A549 (cell line): ENCODE measurements at regions of chr10 and their contacts with region 1.

Region 1: DNA sequence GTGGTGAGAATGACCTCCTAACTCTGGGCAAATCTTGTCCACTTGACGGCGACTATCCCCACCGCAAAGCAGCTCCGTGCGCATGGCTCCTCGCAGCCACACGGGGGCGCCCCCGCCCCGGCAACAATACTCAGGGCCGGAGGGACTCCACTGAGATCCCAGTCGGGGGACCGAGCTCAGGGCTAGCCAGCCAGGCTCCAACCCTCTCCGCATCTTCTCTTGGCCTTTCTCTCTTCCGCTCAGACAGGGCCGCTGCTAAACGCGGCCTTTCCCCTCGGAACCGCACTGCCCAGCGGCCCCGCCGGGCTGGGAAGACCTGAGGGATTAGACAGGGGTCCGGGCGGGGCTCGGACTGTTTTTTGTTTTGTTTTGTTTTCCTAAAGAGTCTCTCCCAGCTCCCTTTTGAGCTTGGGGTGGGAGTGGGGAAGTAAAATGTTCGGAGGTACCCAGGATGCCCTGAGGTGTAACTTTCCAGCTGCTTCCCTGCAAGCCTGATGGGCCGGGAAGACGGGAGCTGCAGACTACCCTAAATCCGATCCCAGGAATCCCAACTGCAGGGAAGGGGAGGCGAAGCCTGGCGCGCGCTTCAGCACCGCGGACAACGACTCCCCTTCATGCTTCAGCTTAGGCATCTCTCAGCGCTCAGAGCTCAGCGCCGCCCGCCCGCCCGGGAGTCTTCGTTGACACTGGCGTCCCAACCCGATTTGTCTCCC is 2.7 kb downstream of the KCNIP2 start:
- DNase-seq: peak; percentile 83 to 86
- ATAC-seq: peak; percentile 78 to 90
- H3K4me3 ChIP-seq: peak overlapping the region; percentile 38; the same call in 1 of the 3 replicates
- H3K27ac ChIP-seq: peak overlapping the region in 1 of 2 experiments; percentile 77; a peak in 3 of 6 replicates
- H3K4me1 ChIP-seq: peaks cover 20% of the 10 kb centered on the region
- CTCF ChIP-seq: peak; percentile 96
- EP300 ChIP-seq: no peak
- POLR2A ChIP-seq: no peak
- RAD21 ChIP-seq: peak; percentile 87 to 95

Region 2: DNA sequence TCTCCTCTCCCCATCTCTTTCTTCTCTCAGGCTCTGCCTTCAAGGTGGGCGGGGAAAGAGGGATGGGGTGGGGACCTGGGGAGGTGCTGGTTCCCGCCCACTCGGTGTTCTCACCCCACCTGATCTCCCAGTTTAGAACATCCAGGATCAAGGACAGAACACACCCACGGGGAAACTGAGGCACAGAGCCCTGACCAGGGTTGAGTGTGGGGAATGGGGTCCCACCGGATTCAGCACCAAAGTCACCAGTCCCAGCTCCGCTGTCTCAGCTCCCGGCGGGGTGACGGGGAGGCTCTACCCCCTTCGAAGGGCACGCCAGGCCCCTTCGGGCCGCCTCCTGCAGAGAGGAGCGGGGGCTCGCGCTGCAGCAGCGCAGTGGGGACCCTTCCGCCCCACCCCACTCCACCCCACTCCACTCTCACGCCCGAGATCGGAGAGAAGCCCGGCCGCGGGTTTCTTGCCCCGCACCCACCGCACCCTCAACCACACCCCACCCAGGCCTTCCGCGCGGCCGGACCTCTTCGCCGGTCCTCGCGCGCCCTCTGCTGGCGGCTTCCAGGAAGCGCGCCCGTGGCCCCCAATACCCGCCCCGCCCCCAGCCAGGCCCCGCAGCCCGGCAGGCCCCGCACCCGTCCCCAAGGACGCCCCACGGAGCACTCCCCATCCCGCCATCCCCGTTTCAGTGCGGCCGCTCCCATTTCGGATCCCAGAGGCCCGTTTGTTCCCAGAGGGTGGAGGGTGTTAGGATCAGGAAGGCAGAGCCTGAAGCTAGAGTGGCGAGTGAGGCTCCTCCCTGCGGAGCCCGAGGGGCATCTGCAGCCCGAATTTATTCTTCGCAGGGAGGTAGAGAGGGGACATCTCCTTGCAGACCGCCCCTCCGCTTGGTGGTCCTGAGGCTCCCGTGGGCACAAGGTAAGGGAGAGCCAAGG is 270.8 kb before region 1 on chr10:
- CTCF ChIA-PET with region 1: no interaction called
- POLR2A ChIA-PET with region 1: no interaction called
- DNase-seq: peak; percentile 69 to 88
- ATAC-seq: peak; percentile 69 to 88
- H3K4me3 ChIP-seq: peak overlapping the region; percentile 63
- H3K27ac ChIP-seq: peak overlapping the region; percentile 81 to 92
- H3K4me1 ChIP-seq: peaks cover 10% of the 10 kb centered on the region; the same call in 2 of the 3 replicates
- CTCF ChIP-seq: peak; percentile 93
- EP300 ChIP-seq: no peak
- POLR2A ChIP-seq: peak; percentile 26; the same call in 1 of the 2 replicates
- RAD21 ChIP-seq: peak; percentile 75 to 96

Region 3: GRCh38 chr10:101818119-101818871 is 22.6 kb before region 1 on chr10 and contains the start of gene OGA:
- CTCF ChIA-PET with region 1: interaction called, 47 read pairs
- POLR2A ChIA-PET with region 1: interaction called, 9 read pairs
- DNase-seq: peak; percentile 97 to 100
- ATAC-seq: peak; percentile 87 to 94
- H3K4me3 ChIP-seq: peak within 1 kb of the TSS; percentile 96
- H3K27ac ChIP-seq: peak within 1 kb of the TSS; percentile 95 to 97
- H3K4me1 ChIP-seq: peaks cover 30% of the 10 kb centered on the region
- CTCF ChIP-seq: no peak
- EP300 ChIP-seq: no peak
- POLR2A ChIP-seq: peak; percentile 86
- RAD21 ChIP-seq: no peak
- polyA plus RNA-seq, gene OGA: 79.1 and 84.5 TPM in 2 replicates

Region 4: DNA sequence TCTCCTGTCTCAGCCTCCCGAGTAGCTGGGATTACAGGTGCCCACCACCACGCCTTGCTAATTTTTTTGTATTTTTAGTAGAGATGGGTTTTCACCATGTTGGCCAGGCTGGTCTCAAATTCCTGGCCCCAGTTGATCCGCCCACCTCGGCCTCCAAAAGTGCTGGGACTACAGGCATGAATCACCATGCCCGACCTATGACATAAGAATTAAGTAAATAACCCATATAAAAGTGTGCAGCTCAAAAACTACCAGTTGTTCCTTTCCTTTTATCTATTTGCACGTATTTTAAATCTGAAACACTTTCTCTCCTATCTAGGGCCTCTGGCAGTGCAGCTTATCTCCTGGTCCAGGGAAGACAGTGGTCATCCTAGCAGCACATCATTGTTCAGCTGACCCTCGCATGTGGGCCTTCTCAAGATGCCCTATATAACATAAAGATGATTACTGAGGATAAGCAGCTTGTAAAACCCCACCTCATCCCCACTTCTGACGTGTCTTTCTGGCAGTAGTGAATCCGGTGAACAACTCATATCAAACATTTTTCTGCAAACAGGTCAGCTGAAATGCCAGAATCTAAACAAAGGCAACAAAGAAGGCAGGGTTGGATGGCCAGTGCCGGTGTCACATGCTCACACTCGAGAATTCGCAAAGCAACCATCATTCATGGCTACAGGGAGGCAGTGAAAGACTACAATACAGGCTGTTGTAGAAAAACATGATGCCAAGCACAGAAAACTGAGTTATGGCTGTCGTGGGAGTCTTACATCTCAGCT is 38.7 kb after region 1 on chr10:
- CTCF ChIA-PET with region 1: interaction called, 73 read pairs
- POLR2A ChIA-PET with region 1: interaction called, 4 read pairs
- DNase-seq: peak in 1 of 2 experiments; percentile 77
- ATAC-seq: peak; percentile 82 to 84
- H3K4me3 ChIP-seq: no peak overlapping the region
- H3K27ac ChIP-seq: peak overlapping the region; percentile 66 to 80
- H3K4me1 ChIP-seq: peaks cover 30% of the 10 kb centered on the region
- CTCF ChIP-seq: no peak
- EP300 ChIP-seq: no peak
- POLR2A ChIP-seq: no peak
- RAD21 ChIP-seq: no peak

Region 5: GRCh38 chr10:101903827-101904550 is 63.1 kb after region 1 on chr10:
- CTCF ChIA-PET with region 1: interaction called, 18 read pairs
- POLR2A ChIA-PET with region 1: no interaction called
- DNase-seq: no peak
- ATAC-seq: no peak
- H3K4me3 ChIP-seq: no peak overlapping the region
- H3K27ac ChIP-seq: no peak overlapping the region
- H3K4me1 ChIP-seq: no peaks in the 10 kb centered on the region
- CTCF ChIP-seq: no peak
- EP300 ChIP-seq: no peak
- POLR2A ChIP-seq: no peak
- RAD21 ChIP-seq: no peak

Region 6: GRCh38 chr10:101961591-101962498 is 120.9 kb after region 1 on chr10:
- CTCF ChIA-PET with region 1: interaction called, 18 read pairs
- POLR2A ChIA-PET with region 1: no interaction called
- DNase-seq: no peak
- ATAC-seq: peak; percentile 25 to 70; a peak in 4 of 6 replicates
- H3K4me3 ChIP-seq: no peak overlapping the region
- H3K27ac ChIP-seq: peak overlapping the region in 1 of 2 experiments; percentile 4; a peak in 1 of 6 replicates
- H3K4me1 ChIP-seq: peaks cover 10% of the 10 kb centered on the region; the same call in 2 of the 3 replicates
- CTCF ChIP-seq: no peak
- EP300 ChIP-seq: no peak
- POLR2A ChIP-seq: no peak
- RAD21 ChIP-seq: no peak

Region 7: DNA sequence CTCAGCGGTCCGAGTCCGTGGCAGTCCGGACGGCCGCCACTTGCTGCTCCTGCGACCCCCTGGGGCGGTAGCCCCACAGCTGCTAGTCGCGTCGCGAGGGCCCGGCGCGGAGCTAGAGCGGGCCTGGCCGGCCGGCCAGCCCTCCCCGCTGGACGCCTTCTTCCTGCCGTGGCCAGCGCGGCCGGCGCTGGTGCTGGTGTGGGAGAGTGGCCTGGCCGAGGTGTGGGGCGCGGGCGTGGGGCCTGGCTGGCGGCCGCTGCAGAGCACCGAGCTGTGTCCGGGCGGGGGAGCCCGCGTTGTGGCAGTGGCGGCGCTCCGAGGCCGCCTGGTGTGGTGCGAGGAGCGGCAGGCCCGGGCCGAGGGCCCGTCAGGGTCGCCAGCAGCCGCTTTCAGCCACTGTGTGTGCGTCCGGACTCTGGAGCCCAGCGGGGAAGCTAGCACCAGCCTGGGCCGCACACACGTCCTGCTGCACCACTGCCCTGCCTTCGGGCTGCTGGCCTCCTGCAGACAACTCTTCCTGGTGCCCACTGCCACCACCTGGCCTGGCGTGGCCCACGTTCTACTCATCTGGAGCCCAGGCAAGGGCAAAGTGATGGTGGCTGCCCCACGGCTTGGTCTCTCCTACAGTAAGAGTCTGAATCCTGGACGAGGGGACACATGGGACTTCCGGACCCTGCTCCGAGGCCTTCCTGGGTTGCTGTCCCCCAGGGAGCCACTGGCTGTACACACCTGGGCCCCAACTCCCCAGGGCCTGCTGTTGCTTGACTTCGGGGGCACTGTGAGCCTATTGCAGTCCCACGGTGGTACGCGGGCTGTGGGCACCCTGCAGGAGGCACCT is 224.9 kb after region 1 on chr10:
- CTCF ChIA-PET with region 1: interaction called, 11 read pairs
- POLR2A ChIA-PET with region 1: interaction called, 4 read pairs
- DNase-seq: peak; percentile 38 to 48
- ATAC-seq: peak; percentile 51 to 65
- H3K4me3 ChIP-seq: peak overlapping the region; percentile 87
- H3K27ac ChIP-seq: peak overlapping the region; percentile 91 to 99
- H3K4me1 ChIP-seq: peaks cover 20% of the 10 kb centered on the region
- CTCF ChIP-seq: no peak; the same call in 2 of the 3 replicates
- EP300 ChIP-seq: no peak
- POLR2A ChIP-seq: no peak; the same call in 1 of the 2 replicates
- RAD21 ChIP-seq: no peak